Gastrocnemius medialis (tissue), 4 donors: ENCODE measurements at regions of chr6 and their contacts with region 1.

Region 1: DNA sequence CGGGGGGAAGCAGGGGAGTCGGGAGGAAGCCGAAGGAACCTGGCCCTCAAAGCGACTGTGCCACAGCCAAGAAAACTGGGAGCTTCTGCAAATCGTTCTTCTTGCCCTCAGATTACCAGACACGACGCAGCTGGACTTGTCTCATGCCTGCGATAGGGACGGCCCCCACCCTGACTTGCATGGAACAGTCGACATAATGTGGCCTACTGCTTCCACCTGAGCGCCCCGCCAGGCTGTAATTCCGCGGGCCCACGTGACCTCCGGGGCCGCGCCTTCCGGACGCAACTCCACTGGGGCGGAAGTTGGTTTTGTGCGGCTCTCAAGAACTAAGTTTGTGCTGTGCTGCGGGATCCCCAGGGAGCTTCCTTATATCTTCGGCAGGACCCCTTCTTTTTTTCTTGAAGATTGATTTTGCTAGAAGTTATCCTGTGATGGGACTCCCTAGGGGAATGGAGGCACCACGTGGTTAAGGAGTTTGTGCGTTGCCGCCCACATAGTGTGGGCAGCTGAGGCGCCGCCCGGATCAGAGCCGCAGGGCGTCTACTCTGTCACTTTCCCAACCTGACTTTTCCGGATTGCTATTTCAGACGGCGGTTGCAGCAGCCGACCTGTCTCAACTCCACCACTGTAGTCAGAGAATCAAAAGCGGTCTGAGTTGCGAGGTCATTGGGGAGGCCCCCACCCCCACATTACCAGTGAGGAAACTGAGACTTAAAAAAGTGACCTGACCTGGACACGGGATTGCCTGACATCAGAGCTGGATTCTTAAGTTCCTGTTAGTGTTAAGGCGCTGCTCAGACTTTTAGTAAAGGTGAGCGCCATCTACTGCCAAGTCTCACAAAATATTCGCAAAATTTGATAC is 540 bp upstream of the CD164 start:
- DNase-seq: peak; percentile 90 to 91
- ATAC-seq: peak; percentile 82 to 84
- H3K4me3 ChIP-seq: peak overlapping the region; percentile 87 to 100 (median 98)
- H3K27ac ChIP-seq: peak overlapping the region; percentile 96 to 100 (median 99)
- H3K4me1 ChIP-seq: peaks cover 42 to 43% of the 10 kb centered on the region in 2 donors
- H3K27me3 ChIP-seq: no peaks in the 10 kb centered on the region
- CTCF ChIP-seq: peak; percentile 51 to 64 (median 55)
- POLR2A ChIP-seq: peak; percentile 50 to 75

Region 2: GRCh38 chr6:108947114-108947854 is 435.5 kb before region 1 on chr6:
- in situ Hi-C with region 1: no loop called
- intact Hi-C with region 1: loop called (anchors 10 kb)
- DNase-seq: no peak
- ATAC-seq: peak in 1 of 2 donors; percentile 14
- H3K4me3 ChIP-seq: no peak overlapping the region
- H3K27ac ChIP-seq: peak overlapping the region; percentile 86 to 91 (median 88)
- H3K4me1 ChIP-seq: peaks cover 66 to 68% of the 10 kb centered on the region in 2 donors
- H3K27me3 ChIP-seq: no peaks in the 10 kb centered on the region
- CTCF ChIP-seq: no peak
- POLR2A ChIP-seq: peak in 1 of 2 donors; percentile 23

Region 3: GRCh38 chr6:109095027-109095834 is 287.6 kb before region 1 on chr6 and contains the start of gene CEP57L1:
- in situ Hi-C with region 1: loop called in 3 of 4 experiments (anchors 5 to 10 kb)
- intact Hi-C with region 1: loop called (anchors 1 kb)
- DNase-seq: peak; percentile 96 to 97
- ATAC-seq: peak; percentile 75 to 81
- H3K4me3 ChIP-seq: peak within 1 kb of the TSS; percentile 67 to 90 (median 82)
- H3K27ac ChIP-seq: peak within 1 kb of the TSS; percentile 93 to 98 (median 96)
- H3K4me1 ChIP-seq: peaks cover 16 to 42% of the 10 kb centered on the region in 2 donors
- H3K27me3 ChIP-seq: no peaks in the 10 kb centered on the region
- CTCF ChIP-seq: peak in 1 of 5 experiments; percentile 27
- POLR2A ChIP-seq: no peak
- total RNA-seq, gene CEP57L1: 10.3 to 29.7 (median 17.5) TPM

Region 4: GRCh38 chr6:109239651-109240321 is 143.0 kb before region 1 on chr6:
- in situ Hi-C with region 1: no loop called
- intact Hi-C with region 1: loop called (anchors 5 kb)
- DNase-seq: no peak
- ATAC-seq: peak; percentile 16 to 42
- H3K4me3 ChIP-seq: no peak overlapping the region
- H3K27ac ChIP-seq: peak overlapping the region; percentile 53 to 73 (median 66)
- H3K4me1 ChIP-seq: peaks cover 33 to 34% of the 10 kb centered on the region in 2 donors
- H3K27me3 ChIP-seq: no peaks in the 10 kb centered on the region
- CTCF ChIP-seq: no peak
- POLR2A ChIP-seq: no peak

Region 5: GRCh38 chr6:109308018-109308492 is 74.8 kb before region 1 on chr6:
- in situ Hi-C with region 1: loop called in 1 of 4 experiments (anchors 10 kb)
- intact Hi-C with region 1: no loop called
- DNase-seq: peak; percentile 73 to 80
- ATAC-seq: peak; percentile 67 to 69
- H3K4me3 ChIP-seq: no peak overlapping the region
- H3K27ac ChIP-seq: peak overlapping the region; percentile 44 to 91 (median 72)
- H3K4me1 ChIP-seq: peaks cover 21 to 38% of the 10 kb centered on the region in 2 donors
- H3K27me3 ChIP-seq: no peaks in the 10 kb centered on the region
- CTCF ChIP-seq: no peak
- POLR2A ChIP-seq: peak; percentile 40 to 45

Region 6: GRCh38 chr6:109411034-109411433 is 28.2 kb after region 1 on chr6:
- in situ Hi-C with region 1: no loop called
- intact Hi-C with region 1: no loop called
- DNase-seq: no peak
- ATAC-seq: no peak
- H3K4me3 ChIP-seq: no peak overlapping the region
- H3K27ac ChIP-seq: no peak overlapping the region
- H3K4me1 ChIP-seq: no peaks in the 10 kb centered on the region
- H3K27me3 ChIP-seq: no peaks in the 10 kb centered on the region
- CTCF ChIP-seq: no peak
- POLR2A ChIP-seq: no peak

Region 7: GRCh38 chr6:109465772-109466171 is 83.0 kb after region 1 on chr6:
- in situ Hi-C with region 1: no loop called
- intact Hi-C with region 1: no loop called
- DNase-seq: no peak
- ATAC-seq: peak in 1 of 2 donors; percentile 47
- H3K4me3 ChIP-seq: no peak overlapping the region
- H3K27ac ChIP-seq: peak overlapping the region in 1 of 4 donors; percentile 42
- H3K4me1 ChIP-seq: no peaks in the 10 kb centered on the region
- H3K27me3 ChIP-seq: no peaks in the 10 kb centered on the region
- CTCF ChIP-seq: no peak
- POLR2A ChIP-seq: no peak

Region 8: DNA sequence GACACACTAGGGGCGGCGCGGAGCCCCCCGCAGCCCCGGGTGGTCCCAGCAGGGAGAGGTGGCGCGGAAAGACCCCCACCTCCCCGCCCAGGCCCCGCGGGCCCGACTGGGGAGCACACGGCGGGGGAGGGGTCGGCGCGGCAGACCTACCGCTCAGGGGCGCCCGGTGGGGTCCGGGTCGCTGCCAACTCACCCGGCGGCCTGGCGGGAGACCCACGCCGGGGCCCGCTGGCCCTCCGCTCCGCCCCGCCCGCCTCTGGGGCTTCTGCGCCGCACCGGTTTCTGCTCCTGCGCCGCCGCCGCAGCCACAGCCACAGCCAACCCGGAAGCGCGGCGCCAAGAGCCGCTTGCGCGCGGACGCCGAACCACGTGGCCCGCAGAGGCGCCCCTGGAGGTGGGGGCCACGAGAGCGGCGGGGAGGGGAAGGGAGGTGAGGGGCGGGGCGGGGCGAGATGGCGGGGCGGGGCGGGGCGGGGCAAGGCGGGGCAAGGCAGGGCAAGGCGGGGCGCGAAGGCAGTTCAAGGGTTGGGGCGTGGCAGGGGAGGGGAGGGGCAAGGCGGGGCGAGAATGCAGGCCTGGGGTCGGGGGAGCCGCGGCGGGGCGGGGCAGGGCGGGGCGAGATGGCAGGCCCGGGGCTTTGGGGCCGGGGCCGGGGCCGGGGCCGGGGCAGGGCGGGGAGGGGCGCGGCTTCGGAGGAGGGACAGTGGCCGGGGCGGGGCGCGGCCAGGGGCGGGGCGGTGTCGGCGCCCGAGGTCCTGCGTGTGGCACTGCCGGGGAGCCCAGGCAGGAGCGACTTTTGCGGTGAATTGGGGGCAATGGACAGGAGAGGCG is 100.3 kb after region 1 on chr6 and contains the start of gene ZBTB24:
- in situ Hi-C with region 1: no loop called
- intact Hi-C with region 1: loop called (anchors 2 kb)
- DNase-seq: peak; percentile 82 to 88
- ATAC-seq: peak; percentile 83 to 87
- H3K4me3 ChIP-seq: peak within 1 kb of the TSS; percentile 66 to 100 (median 94)
- H3K27ac ChIP-seq: peak within 1 kb of the TSS; percentile 84 to 93 (median 88)
- H3K4me1 ChIP-seq: peaks cover 37 to 46% of the 10 kb centered on the region in 2 donors
- H3K27me3 ChIP-seq: no peaks in the 10 kb centered on the region
- CTCF ChIP-seq: no peak
- POLR2A ChIP-seq: peak; percentile 75 to 89
- total RNA-seq, gene ZBTB24: 3.7 to 10.5 (median 6.1) TPM